B cell (primary cell): ENCODE measurements at regions of chr19 and their contacts with region 1.

Region 1: DNA sequence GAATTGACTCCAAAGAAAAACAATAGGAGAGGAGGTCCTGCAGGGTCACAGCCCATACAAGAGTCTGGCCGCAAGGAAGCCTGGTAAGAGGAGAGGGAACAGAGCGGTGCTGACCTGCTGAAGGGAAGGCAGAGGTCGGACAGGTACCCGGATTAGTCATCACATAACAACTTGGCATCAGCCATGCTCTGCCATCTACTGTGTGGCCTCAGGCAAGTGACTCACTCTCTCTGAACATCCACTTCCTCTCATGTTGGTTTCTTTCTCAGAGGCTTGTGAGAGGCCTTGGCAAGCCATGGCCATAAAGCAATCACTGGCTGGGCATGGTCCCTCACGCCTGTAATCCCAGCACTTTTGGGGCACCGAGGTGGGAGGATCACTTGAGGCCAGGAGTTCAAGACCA is 7.4 kb upstream of the CAPNS1 start:
- DNase-seq: no peak
- ATAC-seq: no peak
- H3K4me3 ChIP-seq: no peak overlapping the region
- H3K4me3 Mint-ChIP-seq: no peak overlapping the region
- H3K27ac ChIP-seq: no peak overlapping the region
- H3K27ac Mint-ChIP-seq: no peak overlapping the region
- H3K4me1 ChIP-seq: peaks cover 7 to 28% of the 10 kb centered on the region in 2 donors
- H3K4me1 Mint-ChIP-seq: peaks cover 15% of the 10 kb centered on the region
- H3K27me3 ChIP-seq: no peaks in the 10 kb centered on the region
- H3K27me3 Mint-ChIP-seq: no peaks in the 10 kb centered on the region
- CTCF ChIP-seq: no peak

Region 2: GRCh38 chr19:35822579-35822978 is 309.9 kb before region 1 on chr19:
- CTCF ChIA-PET with region 1: no interaction called
- POLR2A ChIA-PET with region 1: no interaction called
- intact Hi-C with region 1: no loop called
- DNase-seq: no peak
- ATAC-seq: no peak
- H3K4me3 ChIP-seq: no peak overlapping the region
- H3K4me3 Mint-ChIP-seq: no peak overlapping the region
- H3K27ac ChIP-seq: no peak overlapping the region
- H3K27ac Mint-ChIP-seq: no peak overlapping the region
- H3K4me1 ChIP-seq: no peaks in the 10 kb centered on the region
- H3K4me1 Mint-ChIP-seq: peaks cover 2% of the 10 kb centered on the region
- H3K27me3 ChIP-seq: peaks cover 0 to 13% (median 0%) of the 10 kb centered on the region in 4 experiments
- H3K27me3 Mint-ChIP-seq: peaks cover 28% of the 10 kb centered on the region
- CTCF ChIP-seq: no peak

Region 3: GRCh38 chr19:36152352-36153091 is 20.0 kb after region 1 on chr19 and contains the start of gene COX7A1:
- CTCF ChIA-PET with region 1: interaction called, 15 read pairs
- POLR2A ChIA-PET with region 1: no interaction called
- intact Hi-C with region 1: no loop called
- DNase-seq: no peak
- ATAC-seq: no peak
- H3K4me3 ChIP-seq: no peak within 1 kb of the TSS
- H3K4me3 Mint-ChIP-seq: no peak within 1 kb of the TSS
- H3K27ac ChIP-seq: no peak within 1 kb of the TSS
- H3K27ac Mint-ChIP-seq: no peak within 1 kb of the TSS
- H3K4me1 ChIP-seq: no peaks in the 10 kb centered on the region
- H3K4me1 Mint-ChIP-seq: no peaks in the 10 kb centered on the region
- H3K27me3 ChIP-seq: no peaks in the 10 kb centered on the region
- H3K27me3 Mint-ChIP-seq: no peaks in the 10 kb centered on the region
- CTCF ChIP-seq: no peak
- total RNA-seq, gene COX7A1: not detected in 2 replicates

Region 4: DNA sequence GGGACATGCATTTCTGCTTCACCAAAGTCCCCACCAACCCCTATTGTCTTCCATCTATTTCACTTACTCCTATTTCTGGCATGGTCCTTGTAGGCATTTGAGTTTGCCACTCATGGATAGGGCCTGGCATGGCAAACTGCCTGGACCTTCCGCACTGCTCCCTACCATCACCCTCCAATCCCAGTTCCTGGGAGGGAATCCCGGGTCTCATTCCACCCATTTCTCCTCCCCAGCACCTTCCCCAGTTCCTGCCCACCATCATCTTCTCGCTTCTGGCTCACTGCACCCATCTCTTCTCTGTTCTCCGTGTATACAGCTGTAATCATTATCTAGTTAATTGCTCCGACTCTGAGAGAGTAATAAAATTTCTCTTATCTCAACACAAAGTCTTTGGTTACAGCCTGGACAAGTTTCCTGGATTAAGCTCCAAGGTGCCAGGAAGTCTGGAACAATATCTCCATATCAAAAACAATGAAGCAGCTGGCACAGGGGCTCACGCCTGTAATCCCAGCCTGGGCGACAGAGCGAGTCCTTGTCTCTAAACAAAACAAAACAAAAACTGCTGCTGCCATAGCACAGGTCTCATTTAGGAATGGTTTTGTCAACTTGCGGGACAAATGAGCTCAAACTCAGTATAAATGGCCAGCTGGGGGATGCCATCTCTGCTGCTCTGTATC is 36.7 kb after region 1 on chr19:
- CTCF ChIA-PET with region 1: interaction called, 146 read pairs
- POLR2A ChIA-PET with region 1: interaction called, 8 read pairs
- intact Hi-C with region 1: no loop called
- DNase-seq: no peak
- ATAC-seq: no peak
- H3K4me3 ChIP-seq: no peak overlapping the region
- H3K4me3 Mint-ChIP-seq: no peak overlapping the region
- H3K27ac ChIP-seq: no peak overlapping the region
- H3K27ac Mint-ChIP-seq: no peak overlapping the region
- H3K4me1 ChIP-seq: peaks cover 0 to 4% of the 10 kb centered on the region in 2 donors
- H3K4me1 Mint-ChIP-seq: peaks cover 4% of the 10 kb centered on the region
- H3K27me3 ChIP-seq: no peaks in the 10 kb centered on the region
- H3K27me3 Mint-ChIP-seq: no peaks in the 10 kb centered on the region
- CTCF ChIP-seq: no peak

Region 5: DNA sequence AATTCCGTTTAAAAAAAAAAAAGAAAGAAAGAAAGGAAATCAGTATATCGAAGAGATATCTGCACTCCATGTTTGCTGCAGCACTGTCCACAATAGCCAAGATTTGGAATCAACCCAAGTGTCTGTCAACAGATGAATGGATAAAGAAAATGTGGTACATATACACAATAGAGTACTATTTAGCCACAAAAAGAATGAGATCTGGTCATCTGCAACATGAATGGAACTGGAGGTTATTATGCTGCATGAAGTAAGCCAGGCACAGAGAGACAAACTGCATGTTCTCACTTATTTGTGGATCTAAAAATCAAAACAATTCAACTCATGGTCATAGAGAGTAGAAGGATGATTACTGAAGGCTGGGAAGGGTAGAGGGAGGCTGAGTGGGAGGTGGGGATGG is 65.6 kb after region 1 on chr19:
- CTCF ChIA-PET with region 1: no interaction called
- POLR2A ChIA-PET with region 1: no interaction called
- intact Hi-C with region 1: no loop called
- DNase-seq: no peak
- ATAC-seq: no peak
- H3K4me3 ChIP-seq: no peak overlapping the region
- H3K4me3 Mint-ChIP-seq: no peak overlapping the region
- H3K27ac ChIP-seq: no peak overlapping the region
- H3K27ac Mint-ChIP-seq: no peak overlapping the region
- H3K4me1 ChIP-seq: peaks cover 0 to 6% of the 10 kb centered on the region in 2 donors
- H3K4me1 Mint-ChIP-seq: peaks cover 4% of the 10 kb centered on the region
- H3K27me3 ChIP-seq: no peaks in the 10 kb centered on the region
- H3K27me3 Mint-ChIP-seq: no peaks in the 10 kb centered on the region
- CTCF ChIP-seq: no peak